Activated naive CD4-positive, alpha-beta T cell treated with anti-CD3 and anti-CD28 coated beads for 36 hours (primary cell): ENCODE measurements at regions of chr5 and their contacts with region 1.

Region 1: GRCh38 chr5:96463106-96463505 is 30.1 kb upstream of the PCSK1 start:
- DNase-seq: no peak
- H3K4me3 Mint-ChIP-seq: no peak overlapping the region
- H3K27ac Mint-ChIP-seq: no peak overlapping the region
- H3K4me1 Mint-ChIP-seq: no peaks in the 10 kb centered on the region
- H3K27me3 Mint-ChIP-seq: peaks cover 9% of the 10 kb centered on the region

Region 2: DNA sequence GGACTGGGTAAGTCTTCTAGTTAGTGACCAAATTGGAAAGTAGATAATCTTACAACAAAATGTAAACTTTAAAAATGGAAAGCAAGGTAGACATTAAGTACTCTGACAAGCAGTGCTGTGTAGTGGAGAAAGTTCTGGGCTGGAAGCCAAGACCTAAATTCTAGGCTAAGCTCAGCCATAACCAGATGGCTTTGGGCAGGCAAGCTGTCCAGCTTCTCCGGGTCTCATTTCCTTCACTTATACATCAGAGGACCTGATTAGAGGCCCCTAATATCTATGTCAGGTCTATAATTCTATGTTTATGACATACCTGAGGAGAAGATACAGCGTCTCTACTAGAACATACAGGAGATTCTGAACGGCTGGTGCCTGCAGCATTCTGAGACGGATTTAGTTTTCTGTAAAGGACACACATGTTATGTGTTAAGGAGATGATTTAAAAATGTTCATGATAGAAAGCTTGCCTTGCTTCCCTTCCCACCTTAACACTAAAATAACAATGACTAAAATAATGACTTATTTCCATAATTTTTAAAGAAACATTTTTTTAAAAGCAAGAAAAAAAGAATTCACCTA is 562.6 kb before region 1 on chr5:
- CTCF ChIA-PET with region 1: no interaction called
- intact Hi-C with region 1: no loop called
- DNase-seq: no peak
- H3K4me3 Mint-ChIP-seq: no peak overlapping the region
- H3K27ac Mint-ChIP-seq: no peak overlapping the region
- H3K4me1 Mint-ChIP-seq: peaks cover 3% of the 10 kb centered on the region
- H3K27me3 Mint-ChIP-seq: no peaks in the 10 kb centered on the region

Region 3: DNA sequence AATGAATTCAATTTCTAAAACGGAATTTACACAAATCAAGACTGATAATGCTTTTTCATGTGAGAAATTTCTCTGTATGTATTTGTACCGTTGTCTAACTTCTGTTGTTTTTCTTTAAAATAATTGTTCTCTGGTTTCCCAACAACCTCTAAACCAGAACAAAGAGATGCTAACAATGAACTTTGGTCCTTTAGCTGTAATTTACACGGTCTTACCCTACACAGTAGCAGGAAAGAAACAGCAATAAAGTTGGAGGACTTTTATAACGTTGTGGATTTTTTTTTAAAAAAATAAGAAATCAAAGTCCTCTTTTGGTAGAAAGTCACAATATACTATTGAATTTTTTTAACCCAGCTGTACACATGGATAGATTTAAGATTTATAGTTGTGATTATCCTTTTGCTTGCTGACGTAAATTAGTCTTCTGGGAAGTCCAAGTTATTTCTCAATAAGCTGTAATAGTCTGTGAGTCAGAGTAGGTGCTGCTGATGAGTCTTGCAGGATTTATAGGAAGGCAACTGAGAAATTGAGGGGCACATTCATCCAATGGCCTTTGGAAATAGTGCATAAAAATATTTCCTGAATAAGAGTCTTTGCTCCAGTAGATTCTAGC is 46.7 kb after region 1 on chr5:
- CTCF ChIA-PET with region 1: no interaction called
- intact Hi-C with region 1: no loop called
- DNase-seq: no peak
- H3K4me3 Mint-ChIP-seq: no peak overlapping the region
- H3K27ac Mint-ChIP-seq: no peak overlapping the region
- H3K4me1 Mint-ChIP-seq: peaks cover 4% of the 10 kb centered on the region
- H3K27me3 Mint-ChIP-seq: peaks cover 5% of the 10 kb centered on the region

Region 4: DNA sequence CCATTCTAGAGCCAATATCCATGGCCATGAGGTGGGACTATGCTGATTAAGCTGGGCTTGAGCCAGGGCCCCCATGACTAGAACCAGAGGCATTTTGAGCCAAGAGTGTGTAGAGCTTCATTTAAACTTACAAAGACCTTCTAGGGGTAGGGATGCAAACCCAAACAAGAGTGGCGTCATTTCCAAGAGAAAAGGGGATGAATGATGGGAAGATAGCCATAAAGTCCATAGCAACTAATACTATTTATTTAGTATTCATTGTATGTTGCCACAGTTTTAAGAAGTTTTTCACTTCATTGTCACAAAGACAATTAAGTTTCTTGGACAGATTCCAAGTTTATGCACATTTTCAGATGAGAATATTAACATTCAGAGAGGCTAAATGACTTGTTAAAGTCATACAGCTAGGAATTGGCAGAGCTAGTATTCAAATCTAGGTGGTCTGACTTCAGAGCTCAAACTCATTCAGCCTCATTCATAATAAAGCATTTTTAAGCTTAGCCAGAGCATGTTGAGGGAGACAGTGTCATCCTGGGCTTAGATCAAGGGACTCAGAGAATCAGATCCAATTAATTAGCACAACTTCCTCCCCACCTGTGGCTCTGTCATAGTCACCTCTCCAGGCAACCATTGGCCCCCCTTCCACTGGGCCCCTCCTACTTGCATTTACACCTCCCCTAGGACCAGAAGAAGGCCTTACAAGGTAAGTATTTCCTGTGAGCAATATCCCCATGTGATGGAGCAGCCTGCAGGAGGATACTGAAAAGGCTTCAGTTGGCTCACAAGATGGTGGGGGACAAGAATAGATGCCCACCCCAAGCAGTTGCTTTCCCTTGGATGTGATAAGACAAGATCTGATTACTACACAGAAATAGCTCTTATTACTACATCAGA is 64.9 kb after region 1 on chr5:
- CTCF ChIA-PET with region 1: interaction called, 10 read pairs
- intact Hi-C with region 1: no loop called
- DNase-seq: no peak
- H3K4me3 Mint-ChIP-seq: no peak overlapping the region
- H3K27ac Mint-ChIP-seq: no peak overlapping the region
- H3K4me1 Mint-ChIP-seq: peaks cover 7% of the 10 kb centered on the region
- H3K27me3 Mint-ChIP-seq: no peaks in the 10 kb centered on the region